ENCODE measurements at regions of chr1 and their contacts with region 1.

Region 1: GRCh38 chr1:92987462-92987861 is 26.2 kb upstream of the DIPK1A start:
- DNase-seq: no peak
- H3K4me3 ChIP-seq: no peak overlapping the region
- H3K27ac ChIP-seq: no peak overlapping the region
- H3K4me1 ChIP-seq: peaks cover 19% of the 10 kb centered on the region
- H3K27me3 ChIP-seq: no peaks in the 10 kb centered on the region
- CTCF ChIP-seq: no peak

Region 2: DNA sequence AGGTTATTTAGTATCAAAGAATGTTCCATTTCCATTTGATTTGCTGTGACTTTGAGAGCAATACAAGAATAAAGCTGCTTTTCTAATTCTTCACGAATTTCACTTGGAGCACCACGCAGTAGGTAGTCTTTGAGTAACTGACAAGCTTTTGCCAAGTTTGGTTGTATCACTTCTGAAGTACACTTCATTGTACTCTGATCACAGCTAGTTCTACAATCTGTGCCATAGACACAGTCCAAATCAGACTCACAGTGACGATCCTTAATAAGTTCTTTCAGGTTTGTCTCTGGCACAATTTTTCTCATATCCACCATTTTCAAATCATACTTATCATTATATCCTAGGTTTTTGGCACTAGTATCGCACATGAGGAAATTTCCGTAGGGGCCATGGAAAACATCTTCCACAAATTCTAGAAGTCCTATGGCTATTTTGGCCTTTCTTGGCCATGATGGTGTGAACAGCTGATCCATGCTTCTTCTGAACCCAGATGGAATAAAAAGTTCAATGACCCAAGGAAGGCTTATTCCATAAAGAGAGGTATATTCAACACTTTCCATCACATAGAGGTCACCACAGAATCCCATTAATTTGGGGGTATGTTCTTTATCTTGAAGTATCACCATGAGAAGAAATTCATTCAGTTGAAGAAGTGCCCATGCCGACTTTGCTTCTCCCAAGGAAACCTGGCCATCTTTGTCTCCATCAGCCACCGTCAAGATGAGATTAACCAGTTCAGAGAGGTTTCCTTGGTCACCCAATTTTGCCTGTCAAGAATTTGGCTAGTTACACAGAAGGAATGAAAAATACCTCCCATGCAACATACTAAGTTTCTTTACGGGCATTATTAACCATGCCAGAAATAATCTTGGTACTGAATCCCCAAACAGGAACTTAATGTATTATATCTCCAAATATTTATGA is 143.8 kb before region 1 on chr1:
- CTCF ChIA-PET with region 1: no interaction called
- POLR2A ChIA-PET with region 1: interaction called, 11 read pairs
- intact Hi-C with region 1: no loop called
- DNase-seq: no peak
- H3K4me3 ChIP-seq: no peak overlapping the region
- H3K27ac ChIP-seq: 0 out of 2 replicates have a peak overlapping the region, but pooled peaks have one; percentile 0
- H3K4me1 ChIP-seq: no peaks in the 10 kb centered on the region
- H3K27me3 ChIP-seq: no peaks in the 10 kb centered on the region
- CTCF ChIP-seq: no peak

Region 3: GRCh38 chr1:92870591-92870990 is 116.9 kb before region 1 on chr1:
- CTCF ChIA-PET with region 1: no interaction called
- POLR2A ChIA-PET with region 1: no interaction called
- intact Hi-C with region 1: no loop called
- DNase-seq: no peak
- H3K4me3 ChIP-seq: no peak overlapping the region
- H3K27ac ChIP-seq: no peak overlapping the region
- H3K4me1 ChIP-seq: no peaks in the 10 kb centered on the region
- H3K27me3 ChIP-seq: no peaks in the 10 kb centered on the region
- CTCF ChIP-seq: no peak

Measured in PC-9 (cell line).